CD4-positive, alpha-beta T cell (primary cell): ENCODE measurements at regions of chr10 and their contacts with region 1.

Region 1: GRCh38 chr10:88064608-88065382 is 201.4 kb downstream of the PTEN start:
- DNase-seq: peak in 9 of 14 experiments; percentile 7 to 80 (median 32)
- ATAC-seq: peak; percentile 91
- H3K4me3 ChIP-seq: no peak overlapping the region
- H3K4me3 Mint-ChIP-seq: peak overlapping the region; percentile 28
- H3K27ac ChIP-seq: peak overlapping the region in 1 of 2 donors; percentile 38
- H3K27ac Mint-ChIP-seq: peak overlapping the region; percentile 89
- H3K4me1 ChIP-seq: peaks cover 55% of the 10 kb centered on the region
- H3K4me1 Mint-ChIP-seq: peaks cover 80% of the 10 kb centered on the region
- H3K27me3 ChIP-seq: no peaks in the 10 kb centered on the region
- H3K27me3 Mint-ChIP-seq: no peaks in the 10 kb centered on the region
- CTCF ChIP-seq: no peak

Region 2: GRCh38 chr10:87942884-87943527 is 121.8 kb before region 1 on chr10:
- CTCF ChIA-PET with region 1: no interaction called
- POLR2A ChIA-PET with region 1: no interaction called
- intact Hi-C with region 1: loop called in 1 of 2 experiments (anchors 10 kb)
- DNase-seq: no peak
- ATAC-seq: no peak
- H3K4me3 ChIP-seq: no peak overlapping the region
- H3K4me3 Mint-ChIP-seq: no peak overlapping the region
- H3K27ac ChIP-seq: no peak overlapping the region
- H3K27ac Mint-ChIP-seq: no peak overlapping the region
- H3K4me1 ChIP-seq: no peaks in the 10 kb centered on the region
- H3K4me1 Mint-ChIP-seq: peaks cover 43% of the 10 kb centered on the region
- H3K27me3 ChIP-seq: no peaks in the 10 kb centered on the region
- H3K27me3 Mint-ChIP-seq: no peaks in the 10 kb centered on the region
- CTCF ChIP-seq: no peak

Region 3: GRCh38 chr10:87966459-87966858 is 98.3 kb before region 1 on chr10:
- CTCF ChIA-PET with region 1: no interaction called
- POLR2A ChIA-PET with region 1: no interaction called
- intact Hi-C with region 1: loop called in 1 of 2 experiments (anchors 5 kb)
- DNase-seq: no peak
- ATAC-seq: no peak
- H3K4me3 ChIP-seq: no peak overlapping the region
- H3K4me3 Mint-ChIP-seq: no peak overlapping the region
- H3K27ac ChIP-seq: no peak overlapping the region
- H3K27ac Mint-ChIP-seq: no peak overlapping the region
- H3K4me1 ChIP-seq: no peaks in the 10 kb centered on the region
- H3K4me1 Mint-ChIP-seq: peaks cover 4% of the 10 kb centered on the region
- H3K27me3 ChIP-seq: no peaks in the 10 kb centered on the region
- H3K27me3 Mint-ChIP-seq: no peaks in the 10 kb centered on the region
- CTCF ChIP-seq: no peak

Region 4: DNA sequence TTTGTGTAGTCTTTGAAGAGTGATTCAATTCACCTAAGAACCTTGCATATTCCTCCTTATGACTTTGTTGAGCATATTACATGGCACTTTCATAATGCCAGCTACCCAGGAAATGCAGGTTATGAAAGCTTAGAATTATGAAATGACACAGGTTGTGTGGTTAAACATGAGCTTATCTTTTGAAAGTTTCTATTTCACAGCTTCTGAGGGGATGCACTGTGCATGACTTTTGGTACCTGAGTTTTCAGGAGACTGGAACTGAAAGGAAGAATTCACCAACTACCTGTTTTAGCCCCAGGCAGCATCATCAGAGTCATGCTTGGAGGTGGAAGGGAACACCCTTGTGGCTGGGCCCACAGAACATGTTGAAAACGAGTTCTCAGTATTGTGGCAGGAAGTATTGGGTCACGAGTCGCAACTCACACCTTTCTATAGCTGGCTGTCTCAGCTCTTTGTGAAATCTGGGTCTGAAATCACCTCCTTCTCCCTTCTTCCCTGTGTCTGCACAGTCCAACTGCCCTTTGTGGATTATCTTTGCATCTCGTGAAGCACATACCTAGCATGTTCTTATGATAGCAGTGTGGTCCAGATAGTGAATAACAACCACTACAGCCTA is 26.8 kb after region 1 on chr10:
- CTCF ChIA-PET with region 1: no interaction called
- POLR2A ChIA-PET with region 1: interaction called, 14 read pairs
- intact Hi-C with region 1: loop called in 1 of 2 experiments (anchors 1 kb)
- DNase-seq: peak; percentile 28 to 93 (median 52)
- ATAC-seq: peak; percentile 96
- H3K4me3 ChIP-seq: no peak overlapping the region
- H3K4me3 Mint-ChIP-seq: peak overlapping the region; percentile 28
- H3K27ac ChIP-seq: peak overlapping the region; percentile 17 to 72
- H3K27ac Mint-ChIP-seq: peak overlapping the region; percentile 73
- H3K4me1 ChIP-seq: peaks cover 32% of the 10 kb centered on the region
- H3K4me1 Mint-ChIP-seq: peaks cover 51% of the 10 kb centered on the region
- H3K27me3 ChIP-seq: no peaks in the 10 kb centered on the region
- H3K27me3 Mint-ChIP-seq: no peaks in the 10 kb centered on the region
- CTCF ChIP-seq: no peak

Region 5: DNA sequence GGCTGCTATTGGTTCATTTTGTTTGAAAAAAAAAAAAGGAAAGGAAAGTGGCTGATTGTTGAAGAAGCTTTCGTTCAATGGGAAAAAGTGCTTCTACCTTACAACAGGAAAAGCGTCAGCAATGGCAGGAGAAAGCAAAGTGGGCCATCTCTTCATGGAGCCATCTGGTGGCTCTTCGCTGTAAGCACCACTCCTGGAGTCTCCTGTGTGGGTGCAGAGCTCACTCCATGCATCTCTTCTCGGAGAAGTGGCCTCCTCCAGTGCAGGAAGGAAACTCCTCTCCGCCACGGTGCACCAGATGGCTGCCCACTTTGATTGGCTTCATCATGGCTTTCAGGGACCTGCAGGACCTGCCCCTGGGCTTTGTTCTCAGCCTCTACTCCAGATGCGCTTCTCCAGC is 49.6 kb after region 1 on chr10:
- CTCF ChIA-PET with region 1: no interaction called
- POLR2A ChIA-PET with region 1: no interaction called
- intact Hi-C with region 1: no loop called
- DNase-seq: peak in 7 of 14 experiments; percentile 4 to 64 (median 43)
- ATAC-seq: peak; percentile 62
- H3K4me3 ChIP-seq: no peak overlapping the region
- H3K4me3 Mint-ChIP-seq: no peak overlapping the region
- H3K27ac ChIP-seq: no peak overlapping the region
- H3K27ac Mint-ChIP-seq: no peak overlapping the region
- H3K4me1 ChIP-seq: peaks cover 35% of the 10 kb centered on the region
- H3K4me1 Mint-ChIP-seq: no peaks in the 10 kb centered on the region
- H3K27me3 ChIP-seq: no peaks in the 10 kb centered on the region
- H3K27me3 Mint-ChIP-seq: no peaks in the 10 kb centered on the region
- CTCF ChIP-seq: peak; percentile 50